Endothelial cell of umbilical vein (primary cell): ENCODE measurements at regions of chr3 and their contacts with region 1.

Region 1: DNA sequence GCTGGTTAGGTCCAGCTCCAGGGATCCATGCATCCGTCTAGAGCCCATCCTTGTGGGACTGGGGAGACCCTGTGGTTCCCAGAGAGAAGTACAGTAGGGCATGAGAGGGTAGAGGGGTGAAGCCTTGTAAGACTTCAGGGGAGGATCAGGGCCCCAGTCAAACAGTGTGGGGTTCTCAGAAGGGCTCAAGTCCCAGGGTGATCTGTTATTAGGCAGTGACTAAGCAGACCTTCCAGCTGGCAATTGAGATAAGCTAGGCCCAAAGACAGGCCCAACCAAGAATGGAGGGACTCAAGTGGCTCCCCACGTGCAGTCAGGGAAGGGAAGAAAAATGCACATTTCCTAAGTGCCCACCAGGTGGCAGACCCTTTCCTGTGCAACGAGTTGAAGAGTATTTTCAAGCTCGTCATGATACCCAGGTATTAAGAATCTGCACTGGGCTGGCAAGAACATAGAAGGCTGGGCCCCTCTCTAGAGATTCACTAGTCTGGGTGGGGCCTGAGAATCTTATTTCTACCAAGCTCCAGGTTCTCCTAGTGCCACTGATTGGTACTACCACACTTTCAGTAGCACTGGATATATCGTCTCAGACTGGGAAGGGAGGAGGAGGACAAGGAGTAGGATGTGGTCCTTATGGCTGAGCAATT is 240.8 kb downstream of the NR1D2 start:
- DNase-seq: peak; percentile 67
- H3K4me3 ChIP-seq: no peak overlapping the region
- H3K27ac ChIP-seq: no peak overlapping the region
- H3K4me1 ChIP-seq: no peaks in the 10 kb centered on the region
- H3K27me3 ChIP-seq: no peaks in the 10 kb centered on the region
- CTCF ChIP-seq: peak; percentile 63 to 65
- POLR2A ChIP-seq: no peak

Region 2: GRCh38 chr3:24168977-24169376 is 16.9 kb before region 1 on chr3:
- CTCF ChIA-PET with region 1: interaction called, 11 read pairs
- POLR2A ChIA-PET with region 1: no interaction called
- dilution Hi-C with region 1: no loop called
- intact Hi-C with region 1: no loop called
- DNase-seq: no peak
- H3K4me3 ChIP-seq: no peak overlapping the region
- H3K27ac ChIP-seq: no peak overlapping the region
- H3K4me1 ChIP-seq: no peaks in the 10 kb centered on the region
- H3K27me3 ChIP-seq: no peaks in the 10 kb centered on the region
- CTCF ChIP-seq: no peak
- POLR2A ChIP-seq: no peak

Region 3: DNA sequence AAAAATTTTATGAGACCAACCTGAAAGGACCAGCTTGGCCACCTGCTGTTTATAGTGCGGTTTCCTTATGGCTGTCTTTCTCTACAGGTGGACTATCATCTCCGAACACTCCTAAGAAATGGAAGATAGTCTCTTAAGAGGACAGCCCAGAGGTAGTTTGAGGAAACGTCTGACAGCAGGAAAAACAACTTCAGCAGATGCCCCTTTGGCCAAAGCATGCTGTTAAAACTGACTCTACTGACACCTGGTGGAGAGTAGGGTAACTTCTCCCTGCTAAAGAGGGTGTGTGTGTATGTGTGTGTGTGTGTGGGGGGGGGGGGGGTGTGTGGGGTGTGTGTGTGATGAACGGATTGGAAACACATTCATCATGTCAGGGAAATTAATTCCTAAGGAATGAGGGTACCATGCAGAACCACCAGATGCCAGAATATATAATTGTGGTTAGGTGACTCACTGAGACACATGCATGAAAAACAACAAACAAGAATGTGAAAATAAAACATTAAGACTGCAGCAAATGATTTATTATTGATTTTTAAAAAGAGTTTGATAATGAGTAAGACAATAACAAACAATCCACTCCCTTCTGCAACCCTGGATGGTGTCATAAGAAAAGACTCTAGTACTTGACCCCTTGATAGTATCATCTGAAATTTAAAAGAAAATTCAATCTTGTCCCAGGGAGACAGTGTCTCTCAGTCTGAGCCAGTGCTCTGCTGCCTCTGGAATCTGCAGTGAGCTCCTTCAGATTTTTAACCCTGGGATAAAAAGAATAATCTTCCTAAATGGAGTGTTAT is 52.3 kb after region 1 on chr3:
- CTCF ChIA-PET with region 1: interaction called, 29 read pairs
- POLR2A ChIA-PET with region 1: no interaction called
- dilution Hi-C with region 1: no loop called
- intact Hi-C with region 1: loop called (anchors 1 kb)
- DNase-seq: peak; percentile 78
- H3K4me3 ChIP-seq: no peak overlapping the region
- H3K27ac ChIP-seq: no peak overlapping the region
- H3K4me1 ChIP-seq: peaks cover 23% of the 10 kb centered on the region
- H3K27me3 ChIP-seq: no peaks in the 10 kb centered on the region
- CTCF ChIP-seq: peak; percentile 55 to 75
- POLR2A ChIP-seq: no peak

Region 4: DNA sequence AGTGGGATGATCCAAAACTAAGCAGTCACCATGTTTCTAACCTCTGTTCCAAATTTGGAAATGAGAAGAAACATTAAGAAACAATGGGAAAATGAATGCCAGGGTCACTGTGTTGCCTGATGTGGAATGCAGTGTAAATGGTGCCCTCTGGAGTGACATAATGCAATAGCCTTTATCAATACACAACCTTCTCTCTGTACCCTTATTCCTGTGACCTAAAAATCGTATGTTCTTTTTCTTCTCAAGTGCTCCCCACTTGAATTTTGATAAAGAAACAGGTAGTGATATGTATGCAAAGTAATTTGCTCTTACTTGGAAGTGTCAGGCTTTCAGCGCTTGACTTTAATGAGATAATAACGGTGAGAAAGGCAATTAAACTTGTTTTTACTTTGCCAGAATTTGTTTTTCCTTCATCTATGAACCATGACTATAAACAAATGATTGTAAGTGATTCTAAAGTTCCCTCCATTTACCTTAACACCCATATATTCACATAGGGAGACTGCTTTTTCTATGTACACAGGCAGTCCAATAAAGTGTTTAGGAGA is 454.5 kb after region 1 on chr3:
- CTCF ChIA-PET with region 1: interaction called, 4 read pairs
- POLR2A ChIA-PET with region 1: no interaction called
- dilution Hi-C with region 1: no loop called
- intact Hi-C with region 1: loop called (anchors 1 kb)
- DNase-seq: peak; percentile 63
- H3K4me3 ChIP-seq: no peak overlapping the region
- H3K27ac ChIP-seq: no peak overlapping the region
- H3K4me1 ChIP-seq: peaks cover 9% of the 10 kb centered on the region
- H3K27me3 ChIP-seq: no peaks in the 10 kb centered on the region
- CTCF ChIP-seq: peak; percentile 34 to 58
- POLR2A ChIP-seq: no peak